ENCODE measurements at regions of chr22 and their contacts with region 1.

Region 1: DNA sequence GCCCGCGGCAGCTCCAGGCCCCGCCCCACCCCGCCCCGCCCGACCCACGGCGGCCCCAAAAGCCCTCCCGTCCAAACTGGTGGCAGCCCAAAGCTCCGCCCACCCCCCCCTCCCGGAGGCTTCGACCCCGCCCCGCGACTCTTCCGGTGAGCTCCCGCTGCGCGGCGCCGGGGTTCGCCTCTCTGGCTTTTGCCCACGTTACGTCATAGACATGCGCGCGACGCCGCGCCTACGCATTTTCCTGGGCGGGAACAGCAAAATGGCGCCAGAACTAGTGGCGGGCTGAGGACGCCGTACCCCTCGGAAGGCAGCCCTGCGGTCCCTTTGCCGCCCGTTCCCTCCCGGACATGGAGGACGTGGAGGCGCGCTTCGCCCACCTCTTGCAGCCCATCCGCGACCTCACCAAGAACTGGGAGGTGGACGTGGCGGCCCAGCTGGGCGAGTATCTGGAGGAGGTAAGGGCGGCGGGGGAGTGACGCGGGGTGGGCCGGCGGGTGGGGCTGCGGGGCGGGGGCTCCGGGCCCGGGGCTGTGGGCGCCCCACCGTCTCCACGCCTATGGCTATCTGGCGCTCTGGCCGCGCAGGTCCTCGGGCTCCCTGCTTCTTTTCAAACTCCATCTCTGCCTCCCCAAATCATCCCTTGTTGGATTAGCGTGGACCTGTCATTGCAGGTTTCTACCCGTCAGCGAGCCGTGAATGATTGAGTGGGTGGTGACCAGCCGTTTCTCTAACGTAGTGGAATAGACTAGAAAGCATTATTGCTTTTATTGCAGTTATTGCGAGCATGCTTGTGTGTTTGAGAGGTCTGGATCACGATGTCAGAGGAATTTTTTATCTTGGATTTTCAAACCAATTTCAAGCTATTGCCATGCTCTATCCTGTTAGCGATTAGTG is at the start of gene NCAPH2:
- DNase-seq: peak; percentile 93
- H3K4me3 ChIP-seq: peak within 1 kb of the TSS; percentile 82 to 96 (median 95)
- H3K27ac ChIP-seq: peak within 1 kb of the TSS; percentile 59
- H3K4me1 ChIP-seq: peaks cover 37% of the 10 kb centered on the region
- H3K27me3 ChIP-seq: no peaks in the 10 kb centered on the region
- CTCF ChIP-seq: peak in 1 of 2 donors; percentile 16
- total RNA-seq, gene NCAPH2: 18.2 to 41.0 TPM

Region 2: DNA sequence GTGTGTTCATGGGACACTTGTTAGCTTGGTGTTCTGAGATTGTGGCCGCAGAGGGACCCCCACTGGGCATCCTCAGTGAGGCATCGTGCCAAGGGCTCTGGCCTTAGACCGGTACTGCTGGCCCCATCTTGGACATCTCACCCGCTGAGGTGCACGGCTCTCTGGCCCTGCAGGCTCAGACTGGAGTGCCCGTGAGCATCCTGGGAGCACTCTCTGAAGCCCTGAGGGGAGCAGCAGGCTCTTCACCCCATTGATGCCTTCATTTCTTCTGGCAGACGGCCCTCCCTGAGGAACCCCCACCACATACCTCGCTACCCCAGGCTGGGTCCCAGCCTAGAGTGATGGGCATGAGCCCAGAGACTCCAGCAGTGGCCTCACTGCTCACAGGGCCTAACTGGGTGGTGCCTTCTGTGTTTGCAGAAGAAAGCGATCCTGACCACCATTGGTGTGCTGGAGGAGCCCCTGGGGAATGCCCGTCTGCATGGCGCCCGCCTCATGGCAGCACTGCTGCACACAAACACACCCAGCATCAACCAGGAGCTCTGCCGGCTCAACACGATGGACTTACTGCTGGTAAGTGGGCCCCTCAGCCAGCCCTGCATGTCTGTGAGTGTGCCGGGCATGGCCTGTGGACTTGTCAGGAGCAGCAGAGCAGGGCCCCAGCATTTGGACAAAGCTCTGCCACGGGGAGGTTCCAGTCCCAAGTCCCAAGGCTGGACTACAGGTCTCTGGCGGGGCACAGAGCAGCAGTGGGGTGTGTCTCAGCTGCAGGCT is 85.0 kb before region 1 on chr22:
- CTCF ChIA-PET with region 1: no interaction called
- dilution Hi-C with region 1: loop called (anchors 5 kb)
- in situ Hi-C with region 1: no loop called
- intact Hi-C with region 1: no loop called
- DNase-seq: no peak
- H3K4me3 ChIP-seq: no peak overlapping the region
- H3K27ac ChIP-seq: no peak overlapping the region
- H3K4me1 ChIP-seq: no peaks in the 10 kb centered on the region
- H3K27me3 ChIP-seq: no peaks in the 10 kb centered on the region
- CTCF ChIP-seq: no peak

Region 3: DNA sequence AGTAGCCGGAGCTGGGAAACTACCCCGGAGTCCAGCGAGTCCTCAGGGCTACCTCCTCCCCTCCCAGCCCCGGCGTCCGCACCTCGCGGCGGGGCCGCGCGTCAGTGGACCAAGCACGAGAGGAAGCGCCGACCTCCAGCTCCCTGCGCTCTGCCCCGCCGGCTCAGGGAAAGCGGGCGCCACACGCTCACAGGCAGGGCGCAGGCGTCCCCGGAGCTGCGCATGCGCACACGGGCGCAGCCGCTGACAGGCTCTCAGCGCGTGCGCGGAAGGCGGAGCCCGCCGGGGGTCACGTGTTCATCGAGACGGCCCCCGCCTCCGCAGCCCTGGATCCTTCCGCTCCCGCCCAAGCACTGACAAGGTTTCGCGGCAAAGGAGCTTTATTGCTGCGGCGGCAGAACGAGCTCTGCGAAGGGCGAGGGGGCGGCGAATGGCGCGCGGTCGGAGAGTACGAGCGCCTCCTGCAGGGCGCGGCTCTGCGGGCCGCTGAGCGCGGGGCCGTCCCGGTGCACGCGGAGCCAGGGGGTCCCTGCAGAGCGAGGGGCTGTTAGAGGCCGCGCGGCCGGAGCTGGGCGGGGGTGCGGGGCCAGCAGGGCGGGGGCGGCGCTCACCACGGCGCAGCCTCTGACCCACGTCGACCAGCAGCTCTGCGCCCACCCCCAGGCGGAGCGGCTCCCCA is 17.3 kb after region 1 on chr22 and contains the start of gene SCO2:
- CTCF ChIA-PET with region 1: interaction called, 7 read pairs
- dilution Hi-C with region 1: no loop called
- in situ Hi-C with region 1: no loop called
- intact Hi-C with region 1: loop called (anchors 1 kb)
- DNase-seq: peak; percentile 97
- H3K4me3 ChIP-seq: peak within 1 kb of the TSS; percentile 64 to 95 (median 86)
- H3K27ac ChIP-seq: peak within 1 kb of the TSS; percentile 39
- H3K4me1 ChIP-seq: peaks cover 27% of the 10 kb centered on the region
- H3K27me3 ChIP-seq: no peaks in the 10 kb centered on the region
- CTCF ChIP-seq: peak; percentile 18 to 60
- total RNA-seq, gene SCO2: 2.8 to 6.6 TPM

Measured in mammary epithelial cell (primary cell).